ENCODE measurements at regions of chr5 and their contacts with region 1.

Region 1: DNA sequence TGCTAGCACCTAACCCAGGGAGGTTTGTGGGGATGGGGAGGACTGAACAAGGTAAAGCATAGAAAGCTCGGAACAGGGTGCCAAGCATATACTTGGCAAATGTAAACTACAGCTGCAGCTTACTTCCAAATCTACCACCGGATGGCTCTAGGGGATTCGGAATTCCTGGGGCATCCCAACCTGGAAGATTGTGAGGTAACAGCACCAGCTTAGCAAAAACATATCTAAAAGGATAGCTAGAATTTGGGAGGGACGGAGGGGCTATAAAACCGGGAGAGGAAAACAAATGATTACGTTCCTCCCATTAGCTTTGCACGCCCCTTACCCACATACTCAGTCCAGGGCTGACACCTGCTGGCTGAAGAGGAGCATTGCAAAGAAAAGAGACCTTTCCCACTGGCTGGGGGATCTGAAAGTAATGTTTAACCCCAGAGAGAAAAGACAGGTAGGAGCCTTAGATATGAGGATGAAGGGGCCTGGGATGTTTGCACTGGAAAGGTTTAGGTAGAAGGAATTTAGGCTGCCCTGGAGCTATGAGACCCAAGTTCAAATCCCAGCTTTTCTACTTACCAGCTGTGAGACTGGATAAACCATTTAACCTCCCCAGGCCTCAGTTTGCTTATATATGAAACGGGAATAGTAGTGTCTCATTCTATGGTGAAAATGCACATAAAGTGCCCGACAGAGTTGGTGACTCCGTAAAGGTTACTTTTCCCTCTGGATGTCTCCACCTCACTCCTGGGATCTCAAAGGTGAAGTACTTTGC is 73.6 kb downstream of the FAM114A2 start:
- DNase-seq: peak; percentile 47 to 69
- ATAC-seq: peak; percentile 64 to 72 (median 68)
- H3K4me3 ChIP-seq: no peak overlapping the region
- H3K4me3 Mint-ChIP-seq: no peak overlapping the region
- H3K27ac ChIP-seq: no peak overlapping the region
- H3K27ac Mint-ChIP-seq: no peak overlapping the region
- H3K4me1 ChIP-seq: peaks cover 16% of the 10 kb centered on the region
- H3K4me1 Mint-ChIP-seq: peaks cover 12 to 29% of the 10 kb centered on the region in 2 donors
- H3K27me3 ChIP-seq: no peaks in the 10 kb centered on the region
- H3K27me3 Mint-ChIP-seq: peaks cover 0 to 4% of the 10 kb centered on the region in 2 donors
- CTCF ChIP-seq: peak; percentile 94

Region 2: DNA sequence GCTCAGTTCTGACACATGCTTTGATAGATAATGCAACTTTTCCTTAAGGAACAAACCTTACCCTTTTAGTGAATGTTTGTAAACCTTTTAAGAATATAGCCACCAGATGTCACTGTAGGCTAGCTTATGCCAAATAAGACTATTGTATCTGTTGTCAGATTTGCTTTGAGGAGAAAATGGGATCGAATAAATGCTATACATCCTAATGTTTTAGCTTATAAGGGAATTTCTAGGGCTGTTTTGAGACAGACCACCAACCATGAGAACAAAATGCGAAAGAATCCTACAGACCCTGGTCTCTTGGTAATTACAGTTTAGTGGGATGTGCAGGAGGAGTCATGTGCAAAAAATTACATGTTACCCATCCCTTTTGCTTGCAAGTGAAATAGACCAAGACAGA is 1432.3 kb before region 1 on chr5:
- intact Hi-C with region 1: loop called (anchors 1 kb)
- DNase-seq: peak in 1 of 2 donors; percentile 53
- ATAC-seq: peak in 2 of 3 donors; percentile 36 to 43
- H3K4me3 ChIP-seq: no peak overlapping the region
- H3K4me3 Mint-ChIP-seq: no peak overlapping the region
- H3K27ac ChIP-seq: no peak overlapping the region
- H3K27ac Mint-ChIP-seq: no peak overlapping the region
- H3K4me1 ChIP-seq: peaks cover 6% of the 10 kb centered on the region
- H3K4me1 Mint-ChIP-seq: peaks cover 5 to 6% of the 10 kb centered on the region in 2 donors
- H3K27me3 ChIP-seq: no peaks in the 10 kb centered on the region
- H3K27me3 Mint-ChIP-seq: peaks cover 0 to 12% of the 10 kb centered on the region in 2 donors
- CTCF ChIP-seq: peak; percentile 47

Region 3: DNA sequence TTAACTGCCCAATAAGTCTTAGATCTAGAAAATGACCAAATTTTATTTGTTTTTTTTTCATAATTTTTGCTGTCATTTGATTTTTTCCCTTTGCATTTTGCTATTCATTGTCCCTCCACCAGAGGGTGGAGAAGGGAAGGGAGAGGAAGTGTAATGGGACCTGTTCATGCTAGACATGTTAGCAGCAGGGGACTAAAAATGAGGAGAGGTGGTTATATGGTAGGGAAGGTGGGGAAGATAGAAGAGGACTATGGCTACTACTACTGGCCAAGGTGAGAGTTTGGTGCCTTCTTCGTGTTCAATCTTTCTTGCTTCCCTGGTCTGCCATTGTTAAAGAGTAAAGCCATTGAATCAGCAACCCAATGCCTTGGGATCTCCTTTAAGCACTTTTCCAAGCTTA is 468.2 kb before region 1 on chr5:
- intact Hi-C with region 1: loop called (anchors 2 kb)
- DNase-seq: no peak
- ATAC-seq: no peak
- H3K4me3 ChIP-seq: no peak overlapping the region
- H3K4me3 Mint-ChIP-seq: no peak overlapping the region
- H3K27ac ChIP-seq: no peak overlapping the region
- H3K27ac Mint-ChIP-seq: no peak overlapping the region
- H3K4me1 ChIP-seq: no peaks in the 10 kb centered on the region
- H3K4me1 Mint-ChIP-seq: no peaks in the 10 kb centered on the region
- H3K27me3 ChIP-seq: peaks cover 3% of the 10 kb centered on the region
- H3K27me3 Mint-ChIP-seq: peaks cover 12 to 21% of the 10 kb centered on the region in 2 donors
- CTCF ChIP-seq: no peak

Region 4: DNA sequence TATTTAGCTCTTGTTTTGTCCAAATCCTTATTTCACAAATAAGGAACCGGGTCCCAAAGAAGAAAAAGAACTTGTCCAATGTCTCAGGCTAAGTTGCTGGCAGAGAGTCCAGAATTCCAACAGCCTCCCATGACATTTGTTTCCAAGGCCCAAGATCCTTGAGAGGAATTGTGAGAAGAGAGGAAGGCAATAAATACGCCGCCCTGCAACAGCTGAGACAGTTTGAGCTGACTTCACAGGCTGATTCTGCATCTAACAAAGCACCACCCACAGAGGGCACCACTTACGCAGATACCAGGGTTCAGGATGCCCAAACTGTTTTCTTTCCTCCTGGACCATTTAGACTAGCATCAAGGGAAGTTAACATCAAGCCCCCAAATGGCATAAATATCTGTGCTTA is 137.7 kb before region 1 on chr5:
- intact Hi-C with region 1: loop called (anchors 10 kb)
- DNase-seq: no peak
- ATAC-seq: no peak
- H3K4me3 ChIP-seq: no peak overlapping the region
- H3K4me3 Mint-ChIP-seq: no peak overlapping the region
- H3K27ac ChIP-seq: no peak overlapping the region
- H3K27ac Mint-ChIP-seq: no peak overlapping the region
- H3K4me1 ChIP-seq: no peaks in the 10 kb centered on the region
- H3K4me1 Mint-ChIP-seq: no peaks in the 10 kb centered on the region
- H3K27me3 ChIP-seq: no peaks in the 10 kb centered on the region
- H3K27me3 Mint-ChIP-seq: peaks cover 8 to 14% of the 10 kb centered on the region in 2 donors
- CTCF ChIP-seq: no peak